Cardiac septum (tissue), 1 donor: ENCODE measurements at regions of chr5 and their contacts with region 1.

Region 1: DNA sequence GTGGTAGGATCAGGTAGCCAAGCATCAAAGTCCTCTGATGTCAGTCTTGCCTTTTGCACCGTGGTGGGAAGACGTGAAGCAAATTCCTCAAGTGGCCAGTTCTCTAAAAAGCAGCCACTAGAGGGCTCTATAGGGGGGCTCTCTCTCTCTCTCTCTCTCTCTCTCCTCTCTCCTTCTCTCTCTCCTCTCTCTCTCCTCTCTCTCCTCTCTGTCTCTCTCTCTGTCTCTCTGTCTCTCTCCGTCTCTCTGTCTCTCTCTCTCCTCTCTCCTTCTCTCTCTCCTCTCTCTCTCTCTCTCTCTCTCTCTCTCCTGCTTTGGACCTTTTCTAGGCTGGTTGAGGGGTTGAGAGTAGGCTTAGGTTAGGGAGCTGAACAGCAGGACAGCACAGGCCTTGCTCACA is 13.9 kb upstream of the OSMR start:
- DNase-seq: no peak

Region 2: GRCh38 chr5:38922199-38922598 is 90.3 kb after region 1 on chr5:
- intact Hi-C with region 1: loop called (anchors 5 kb)
- DNase-seq: peak; percentile 78